Breast epithelium (tissue), 4 donors: ENCODE measurements at regions of chr1 and their contacts with region 1.

Region 1: GRCh38 chr1:21302747-21303715 is 12.8 kb upstream of the ECE1 start:
- DNase-seq: no peak
- H3K4me3 ChIP-seq: no peak overlapping the region
- H3K27ac ChIP-seq: peak overlapping the region; percentile 11 to 66
- H3K4me1 ChIP-seq: peaks cover 5 to 13% of the 10 kb centered on the region in 2 donors
- H3K27me3 ChIP-seq: no peaks in the 10 kb centered on the region
- CTCF ChIP-seq: no peak
- POLR2A ChIP-seq: no peak

Region 2: GRCh38 chr1:20507564-20508410 is 795.2 kb before region 1 on chr1 and contains the start of gene MUL1:
- intact Hi-C with region 1: loop called (anchors 5 kb)
- DNase-seq: peak; percentile 90 to 93
- H3K4me3 ChIP-seq: peak within 1 kb of the TSS; percentile 63 to 94 (median 78)
- H3K27ac ChIP-seq: peak within 1 kb of the TSS; percentile 86 to 90
- H3K4me1 ChIP-seq: no peaks in the 10 kb centered on the region
- H3K27me3 ChIP-seq: no peaks in the 10 kb centered on the region
- CTCF ChIP-seq: no peak
- POLR2A ChIP-seq: peak; percentile 73
- total RNA-seq, gene MUL1: 25.4 to 35.1 (median 29.6) TPM